ENCODE measurements at regions of chr18 and their contacts with region 1.

Region 1: DNA sequence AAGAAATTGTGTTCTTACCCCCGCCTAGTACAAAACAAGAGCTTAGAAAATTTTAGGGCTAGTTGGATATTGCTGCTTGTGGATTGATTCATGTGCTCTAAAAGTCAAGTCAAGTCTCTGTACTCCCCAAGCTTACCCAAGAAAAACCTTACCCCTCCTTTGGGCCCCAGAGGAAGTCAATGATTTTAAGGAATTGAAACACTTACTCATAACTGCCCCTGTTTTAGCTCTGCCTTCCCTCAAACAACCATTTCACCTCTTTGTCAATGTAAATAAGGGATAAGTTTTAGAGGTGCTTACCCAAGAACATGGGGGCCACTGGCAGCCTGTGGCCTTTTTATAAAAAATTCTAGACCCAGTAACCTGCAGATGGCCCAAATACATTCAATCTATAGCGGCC is 136.6 kb upstream of the RMP24 start:
- DNase-seq: no peak
- H3K4me3 ChIP-seq: no peak overlapping the region
- H3K27ac ChIP-seq: no peak overlapping the region
- H3K4me1 ChIP-seq: no peaks in the 10 kb centered on the region
- H3K27me3 ChIP-seq: no peaks in the 10 kb centered on the region
- CTCF ChIP-seq: no peak
- EP300 ChIP-seq: no peak
- POLR2A ChIP-seq: no peak
- RAD21 ChIP-seq: no peak

Region 2: DNA sequence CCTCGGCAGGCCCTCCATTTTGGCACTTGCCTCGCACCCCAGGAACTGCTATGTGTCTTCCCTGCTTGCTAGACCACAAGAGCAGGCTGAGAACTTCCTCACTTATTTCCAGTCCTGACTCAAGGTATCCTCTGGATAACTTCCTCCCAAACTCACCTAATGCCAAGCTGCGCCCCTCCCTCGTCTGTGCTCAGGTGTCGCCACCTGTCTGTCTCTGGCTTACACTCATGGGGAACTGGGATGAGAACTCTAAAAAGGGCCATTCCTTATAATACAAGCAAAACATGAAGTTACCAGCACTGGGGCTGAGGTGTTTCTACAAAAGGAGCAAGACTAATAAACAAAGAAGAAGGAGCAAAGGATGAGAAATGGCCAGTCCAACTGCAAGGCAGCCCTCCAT is 54.9 kb before region 1 on chr18:
- CTCF ChIA-PET with region 1: interaction called, 10 read pairs
- POLR2A ChIA-PET with region 1: interaction called, 7 read pairs
- DNase-seq: no peak
- H3K4me3 ChIP-seq: no peak overlapping the region
- H3K27ac ChIP-seq: no peak overlapping the region
- H3K4me1 ChIP-seq: peaks cover 0 to 9% (median 0%) of the 10 kb centered on the region in 4 experiments; a peak in 1 of 7 replicates
- H3K27me3 ChIP-seq: no peaks in the 10 kb centered on the region
- CTCF ChIP-seq: peak; percentile 22 to 40 (median 33); a peak in 3 of 4 replicates
- EP300 ChIP-seq: no peak
- POLR2A ChIP-seq: no peak
- RAD21 ChIP-seq: peak; percentile 24 to 42; a peak in 3 of 4 replicates

Region 3: GRCh38 chr18:35789543-35789942 is 46.3 kb before region 1 on chr18:
- CTCF ChIA-PET with region 1: interaction called, 10 read pairs
- POLR2A ChIA-PET with region 1: no interaction called
- DNase-seq: no peak
- H3K4me3 ChIP-seq: no peak overlapping the region
- H3K27ac ChIP-seq: no peak overlapping the region
- H3K4me1 ChIP-seq: no peaks in the 10 kb centered on the region
- H3K27me3 ChIP-seq: no peaks in the 10 kb centered on the region
- CTCF ChIP-seq: no peak
- EP300 ChIP-seq: no peak
- POLR2A ChIP-seq: no peak
- RAD21 ChIP-seq: no peak

Region 4: DNA sequence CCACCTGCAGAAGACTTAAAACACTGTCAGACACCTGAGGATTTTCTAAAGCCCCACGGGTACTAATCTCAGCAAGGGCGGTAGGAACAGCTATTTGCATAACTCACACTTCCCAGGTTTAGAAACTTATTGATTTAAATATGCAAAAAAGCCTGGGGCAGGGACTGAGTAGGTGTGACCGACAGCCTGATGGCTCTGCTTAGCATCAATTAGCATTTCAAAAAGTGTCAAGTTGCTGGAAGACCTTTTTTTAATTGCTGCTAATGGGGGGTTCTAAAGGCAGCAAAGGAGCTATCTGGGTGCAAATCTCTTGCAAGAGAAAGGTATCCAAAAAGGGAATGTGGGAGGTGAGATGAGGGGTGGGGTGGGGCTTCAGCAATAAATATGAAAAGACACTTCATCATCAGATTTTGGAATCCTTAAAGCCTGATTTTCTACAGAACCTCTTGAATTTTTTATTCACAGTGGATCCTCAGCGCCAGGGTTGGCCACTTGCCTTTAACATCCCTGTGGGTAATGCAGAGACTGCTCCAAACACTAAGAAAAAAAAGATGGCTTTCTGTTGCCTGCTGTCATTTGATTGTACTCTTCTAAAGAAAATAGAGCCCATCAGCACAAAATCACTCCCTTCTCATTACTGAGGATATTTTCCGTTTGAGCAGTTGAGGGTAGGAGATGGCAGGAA is 15.6 kb after region 1 on chr18:
- CTCF ChIA-PET with region 1: interaction called, 7 read pairs
- POLR2A ChIA-PET with region 1: interaction called, 13 read pairs
- DNase-seq: peak; percentile 53 to 81
- H3K4me3 ChIP-seq: peak overlapping the region in 1 of 4 experiments; percentile 17; a peak in 1 of 8 replicates
- H3K27ac ChIP-seq: peak overlapping the region; percentile 70
- H3K4me1 ChIP-seq: peaks cover 6 to 25% (median 22%) of the 10 kb centered on the region in 4 experiments; a peak in 5 of 7 replicates
- H3K27me3 ChIP-seq: no peaks in the 10 kb centered on the region
- CTCF ChIP-seq: no peak
- EP300 ChIP-seq: peak in 1 of 2 experiments; percentile 79; a peak in 1 of 3 replicates
- POLR2A ChIP-seq: no peak
- RAD21 ChIP-seq: no peak